Naive thymus-derived CD4-positive, alpha-beta T cell (primary cell): ENCODE measurements at regions of chr2 and their contacts with region 1.

Region 1: GRCh38 chr2:202387608-202388342 is 11.6 kb downstream of the BMPR2 start:
- DNase-seq: no peak
- ATAC-seq: no peak
- H3K4me3 ChIP-seq: no peak overlapping the region
- H3K4me3 Mint-ChIP-seq: no peak overlapping the region
- H3K27ac ChIP-seq: no peak overlapping the region
- H3K27ac Mint-ChIP-seq: no peak overlapping the region
- H3K4me1 ChIP-seq: no peaks in the 10 kb centered on the region
- H3K4me1 Mint-ChIP-seq: peaks cover 6 to 26% (median 21%) of the 10 kb centered on the region in 7 donors
- H3K27me3 ChIP-seq: no peaks in the 10 kb centered on the region
- H3K27me3 Mint-ChIP-seq: no peaks in the 10 kb centered on the region

Region 2: DNA sequence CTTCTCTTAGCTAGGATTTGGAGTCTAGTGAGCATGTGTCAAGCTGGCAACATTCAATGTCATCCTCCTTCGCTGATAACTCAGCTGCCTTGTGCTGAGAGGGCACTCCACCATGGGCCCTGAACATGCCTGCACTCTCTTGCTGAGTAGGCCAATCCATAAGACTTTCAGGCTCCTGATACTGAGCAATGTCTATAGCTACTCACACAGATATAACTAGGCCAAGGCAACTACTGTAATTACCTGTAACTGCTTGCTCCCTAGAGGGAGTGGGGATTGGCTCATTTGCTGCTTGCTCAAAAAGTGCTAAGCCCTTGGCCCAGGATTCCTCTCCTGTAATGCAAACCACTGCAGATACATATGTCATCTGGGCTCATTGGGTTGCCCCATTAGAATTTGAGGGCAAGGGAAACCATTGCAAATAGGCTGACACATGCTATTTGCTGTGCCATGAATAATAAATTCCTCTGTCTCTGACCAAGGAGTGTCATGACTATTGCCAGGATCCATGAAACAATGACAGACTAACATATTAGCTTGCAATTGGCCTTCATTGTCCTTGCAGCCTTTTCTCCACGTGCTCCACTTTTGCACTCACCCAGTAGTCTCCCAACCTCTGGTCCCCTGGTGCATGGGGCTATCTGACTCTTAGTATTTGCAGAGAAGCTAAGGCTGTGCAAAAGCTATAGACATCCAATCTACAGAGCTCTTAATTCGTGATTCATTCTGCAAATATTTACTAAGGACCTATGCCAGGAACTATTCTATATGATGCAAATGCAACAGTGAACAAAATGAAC is 48.5 kb before region 1 on chr2:
- CTCF ChIA-PET with region 1: no interaction called
- POLR2A ChIA-PET with region 1: no interaction called
- intact Hi-C with region 1: no loop called
- DNase-seq: no peak
- ATAC-seq: no peak
- H3K4me3 ChIP-seq: no peak overlapping the region
- H3K4me3 Mint-ChIP-seq: no peak overlapping the region
- H3K27ac ChIP-seq: no peak overlapping the region
- H3K27ac Mint-ChIP-seq: no peak overlapping the region
- H3K4me1 ChIP-seq: no peaks in the 10 kb centered on the region
- H3K4me1 Mint-ChIP-seq: no peaks in the 10 kb centered on the region
- H3K27me3 ChIP-seq: no peaks in the 10 kb centered on the region
- H3K27me3 Mint-ChIP-seq: no peaks in the 10 kb centered on the region

Region 3: GRCh38 chr2:202361108-202361507 is 26.7 kb before region 1 on chr2:
- CTCF ChIA-PET with region 1: no interaction called
- POLR2A ChIA-PET with region 1: no interaction called
- intact Hi-C with region 1: loop called in 1 of 2 experiments (anchors 1 kb)
- DNase-seq: no peak
- ATAC-seq: no peak
- H3K4me3 ChIP-seq: no peak overlapping the region
- H3K4me3 Mint-ChIP-seq: no peak overlapping the region
- H3K27ac ChIP-seq: no peak overlapping the region
- H3K27ac Mint-ChIP-seq: peak overlapping the region in 2 of 9 donors; percentile 5 to 41
- H3K4me1 ChIP-seq: no peaks in the 10 kb centered on the region
- H3K4me1 Mint-ChIP-seq: no peaks in the 10 kb centered on the region
- H3K27me3 ChIP-seq: no peaks in the 10 kb centered on the region
- H3K27me3 Mint-ChIP-seq: peaks cover 0 to 2% (median 0%) of the 10 kb centered on the region in 5 donors